CD4-positive, alpha-beta T cell (primary cell): ENCODE measurements at regions of chr3 and their contacts with region 1.

Region 1: GRCh38 chr3:160784848-160785247 is 28.8 kb downstream of the PPM1L start:
- DNase-seq: no peak
- ATAC-seq: no peak
- H3K4me3 ChIP-seq: no peak overlapping the region
- H3K4me3 Mint-ChIP-seq: no peak overlapping the region
- H3K27ac ChIP-seq: no peak overlapping the region
- H3K27ac Mint-ChIP-seq: no peak overlapping the region
- H3K4me1 ChIP-seq: no peaks in the 10 kb centered on the region
- H3K4me1 Mint-ChIP-seq: no peaks in the 10 kb centered on the region
- H3K27me3 ChIP-seq: no peaks in the 10 kb centered on the region
- H3K27me3 Mint-ChIP-seq: no peaks in the 10 kb centered on the region
- CTCF ChIP-seq: no peak

Region 2: GRCh38 chr3:159378396-159379194 is 1406.3 kb before region 1 on chr3:
- CTCF ChIA-PET with region 1: no interaction called
- POLR2A ChIA-PET with region 1: no interaction called
- intact Hi-C with region 1: no loop called
- DNase-seq: no peak
- ATAC-seq: no peak
- H3K4me3 ChIP-seq: no peak overlapping the region
- H3K4me3 Mint-ChIP-seq: no peak overlapping the region
- H3K27ac ChIP-seq: no peak overlapping the region
- H3K27ac Mint-ChIP-seq: no peak overlapping the region
- H3K4me1 ChIP-seq: no peaks in the 10 kb centered on the region
- H3K4me1 Mint-ChIP-seq: no peaks in the 10 kb centered on the region
- H3K27me3 ChIP-seq: no peaks in the 10 kb centered on the region
- H3K27me3 Mint-ChIP-seq: no peaks in the 10 kb centered on the region
- CTCF ChIP-seq: no peak

Region 3: DNA sequence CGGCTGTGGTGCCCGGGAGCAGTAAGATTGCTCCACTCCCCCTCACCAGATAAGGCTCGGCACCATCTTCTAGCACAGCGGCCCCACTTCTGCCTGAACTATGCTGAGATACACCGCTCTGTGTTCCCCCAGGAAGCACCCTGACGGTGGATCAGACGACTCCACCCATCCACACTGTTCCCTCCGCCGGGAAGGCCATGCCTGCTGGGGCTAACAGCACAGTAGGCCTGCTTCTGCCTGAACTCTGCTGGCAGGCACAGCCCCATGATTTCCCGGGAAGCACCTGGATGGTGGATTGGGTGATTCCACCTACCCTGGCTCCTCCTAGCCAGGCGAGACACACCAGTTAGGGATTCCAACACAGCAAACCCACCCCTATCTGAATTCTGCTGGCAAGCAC is 65.1 kb before region 1 on chr3:
- CTCF ChIA-PET with region 1: no interaction called
- POLR2A ChIA-PET with region 1: no interaction called
- intact Hi-C with region 1: loop called in 1 of 2 experiments (anchors 5 kb)
- DNase-seq: no peak
- ATAC-seq: no peak
- H3K4me3 ChIP-seq: no peak overlapping the region
- H3K4me3 Mint-ChIP-seq: no peak overlapping the region
- H3K27ac ChIP-seq: no peak overlapping the region
- H3K27ac Mint-ChIP-seq: no peak overlapping the region
- H3K4me1 ChIP-seq: no peaks in the 10 kb centered on the region
- H3K4me1 Mint-ChIP-seq: no peaks in the 10 kb centered on the region
- H3K27me3 ChIP-seq: no peaks in the 10 kb centered on the region
- H3K27me3 Mint-ChIP-seq: peaks cover 20% of the 10 kb centered on the region
- CTCF ChIP-seq: no peak